ENCODE measurements at regions of chr17 and their contacts with region 1.

Region 1: GRCh38 chr17:7502987-7503386 is 18.8 kb downstream of the POLR2A start:
- DNase-seq: peak; percentile 32
- ATAC-seq: peak; percentile 11
- H3K4me3 Mint-ChIP-seq: no peak overlapping the region
- H3K27ac Mint-ChIP-seq: no peak overlapping the region
- H3K4me1 Mint-ChIP-seq: no peaks in the 10 kb centered on the region
- H3K27me3 Mint-ChIP-seq: no peaks in the 10 kb centered on the region

Region 2: GRCh38 chr17:7220582-7221277 is 282.3 kb before region 1 on chr17:
- CTCF ChIA-PET with region 1: no interaction called
- POLR2A ChIA-PET with region 1: no interaction called
- intact Hi-C with region 1: no loop called
- DNase-seq: peak; percentile 84
- ATAC-seq: peak; percentile 62
- H3K4me3 Mint-ChIP-seq: peak overlapping the region; percentile 89
- H3K27ac Mint-ChIP-seq: peak overlapping the region; percentile 90
- H3K4me1 Mint-ChIP-seq: peaks cover 41% of the 10 kb centered on the region
- H3K27me3 Mint-ChIP-seq: no peaks in the 10 kb centered on the region

Region 3: GRCh38 chr17:7515911-7516610 is 13.1 kb after region 1 on chr17:
- CTCF ChIA-PET with region 1: interaction called, 12 read pairs
- POLR2A ChIA-PET with region 1: interaction called, 3 read pairs
- intact Hi-C with region 1: no loop called
- DNase-seq: no peak
- ATAC-seq: no peak
- H3K4me3 Mint-ChIP-seq: no peak overlapping the region
- H3K27ac Mint-ChIP-seq: no peak overlapping the region
- H3K4me1 Mint-ChIP-seq: no peaks in the 10 kb centered on the region
- H3K27me3 Mint-ChIP-seq: no peaks in the 10 kb centered on the region

Region 4: GRCh38 chr17:7700510-7700909 is 197.5 kb after region 1 on chr17:
- CTCF ChIA-PET with region 1: no interaction called
- POLR2A ChIA-PET with region 1: no interaction called
- intact Hi-C with region 1: no loop called
- DNase-seq: no peak
- ATAC-seq: no peak
- H3K4me3 Mint-ChIP-seq: no peak overlapping the region
- H3K27ac Mint-ChIP-seq: no peak overlapping the region
- H3K4me1 Mint-ChIP-seq: peaks cover 10% of the 10 kb centered on the region
- H3K27me3 Mint-ChIP-seq: peaks cover 16% of the 10 kb centered on the region

Measured in activated CD4-positive, alpha-beta T cell treated with anti-CD3 and anti-CD28 coated beads for 36 hours (primary cell).